Body of pancreas (tissue), 4 donors: ENCODE measurements at regions of chr4 and their contacts with region 1.

Region 1: GRCh38 chr4:142126890-142127497 is 490.6 kb downstream of the IL15 start:
- DNase-seq: peak; percentile 64 to 71 (median 67)
- ATAC-seq: peak; percentile 70
- H3K4me3 ChIP-seq: no peak overlapping the region
- H3K27ac ChIP-seq: no peak overlapping the region
- H3K4me1 ChIP-seq: peaks cover 20% of the 10 kb centered on the region
- H3K27me3 ChIP-seq: no peaks in the 10 kb centered on the region
- CTCF ChIP-seq: peak; percentile 41 to 89 (median 77)
- POLR2A ChIP-seq: no peak

Region 2: DNA sequence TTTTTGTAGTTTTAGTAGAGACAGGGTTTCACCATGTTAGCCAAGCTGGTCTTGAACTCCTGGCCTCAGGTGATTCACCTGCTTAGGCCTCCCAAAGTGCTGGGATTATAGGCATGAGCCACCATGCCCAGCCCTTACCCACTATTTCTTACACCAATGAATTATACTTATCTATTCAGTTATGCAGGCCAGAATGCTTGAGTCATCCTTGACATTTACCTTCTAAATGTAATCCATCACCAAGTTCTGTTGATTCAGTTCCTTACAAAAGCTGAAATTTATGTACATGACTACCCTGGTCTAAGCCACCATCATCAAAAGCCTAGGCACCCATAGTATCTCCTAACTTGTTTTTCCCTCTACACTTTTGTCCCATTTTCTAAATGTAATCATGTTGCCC is 95.1 kb after region 1 on chr4:
- intact Hi-C with region 1: no loop called
- DNase-seq: no peak
- ATAC-seq: no peak
- H3K4me3 ChIP-seq: no peak overlapping the region
- H3K27ac ChIP-seq: no peak overlapping the region
- H3K4me1 ChIP-seq: no peaks in the 10 kb centered on the region
- H3K27me3 ChIP-seq: no peaks in the 10 kb centered on the region
- CTCF ChIP-seq: no peak
- POLR2A ChIP-seq: no peak

Region 3: DNA sequence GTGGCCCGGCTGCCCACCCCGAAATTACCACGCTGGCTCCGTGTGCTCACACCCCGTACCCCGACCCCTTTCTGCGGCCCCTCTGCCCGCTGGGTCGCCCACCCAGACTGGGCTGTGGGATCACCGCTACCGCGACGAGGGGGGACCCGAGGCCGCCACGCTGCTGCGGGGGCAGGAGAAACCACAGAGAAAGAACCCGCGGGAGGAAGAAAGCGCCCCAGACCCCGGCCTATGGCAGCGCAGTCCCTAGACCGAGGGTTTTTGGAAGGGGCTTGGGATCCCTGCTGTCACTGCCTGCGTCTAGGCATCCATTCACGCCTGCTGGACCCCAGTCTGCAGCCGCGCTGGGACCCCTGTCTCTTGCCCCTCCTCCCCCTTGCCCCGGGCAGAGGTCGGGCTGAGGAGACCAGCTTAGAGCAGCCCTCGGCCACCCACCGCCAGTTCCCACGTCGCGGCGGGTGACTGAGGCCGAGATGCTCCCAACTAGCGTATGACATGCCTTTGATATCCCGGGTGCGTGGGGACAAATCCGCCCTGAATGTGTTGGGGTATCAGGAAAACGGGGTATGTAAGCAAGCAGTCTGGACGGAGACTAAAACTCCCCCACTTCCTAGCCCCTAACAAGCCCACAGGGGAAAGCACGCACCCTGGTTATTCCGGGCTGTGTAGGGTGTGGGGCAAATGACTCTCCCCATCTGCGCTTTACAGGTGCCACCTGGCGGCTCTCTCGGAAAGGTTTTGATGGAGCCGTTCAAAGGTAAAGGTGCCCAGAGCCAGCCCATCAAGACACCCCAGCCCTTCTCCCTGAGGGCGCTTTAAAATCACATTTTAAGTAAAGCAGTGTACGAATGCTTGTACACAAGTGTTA is 720.0 kb after region 1 on chr4:
- intact Hi-C with region 1: loop called (anchors 5 kb)
- DNase-seq: peak; percentile 67 to 75 (median 70)
- ATAC-seq: peak; percentile 82
- H3K4me3 ChIP-seq: peak overlapping the region; percentile 18 to 62
- H3K27ac ChIP-seq: peak overlapping the region in 3 of 4 donors; percentile 33 to 63 (median 33)
- H3K4me1 ChIP-seq: peaks cover 17% of the 10 kb centered on the region
- H3K27me3 ChIP-seq: no peaks in the 10 kb centered on the region
- CTCF ChIP-seq: peak; percentile 10 to 70 (median 57)
- POLR2A ChIP-seq: no peak